CD4-positive, alpha-beta memory T cell (primary cell): ENCODE measurements at regions of chr11 and their contacts with region 1.

Region 1: DNA sequence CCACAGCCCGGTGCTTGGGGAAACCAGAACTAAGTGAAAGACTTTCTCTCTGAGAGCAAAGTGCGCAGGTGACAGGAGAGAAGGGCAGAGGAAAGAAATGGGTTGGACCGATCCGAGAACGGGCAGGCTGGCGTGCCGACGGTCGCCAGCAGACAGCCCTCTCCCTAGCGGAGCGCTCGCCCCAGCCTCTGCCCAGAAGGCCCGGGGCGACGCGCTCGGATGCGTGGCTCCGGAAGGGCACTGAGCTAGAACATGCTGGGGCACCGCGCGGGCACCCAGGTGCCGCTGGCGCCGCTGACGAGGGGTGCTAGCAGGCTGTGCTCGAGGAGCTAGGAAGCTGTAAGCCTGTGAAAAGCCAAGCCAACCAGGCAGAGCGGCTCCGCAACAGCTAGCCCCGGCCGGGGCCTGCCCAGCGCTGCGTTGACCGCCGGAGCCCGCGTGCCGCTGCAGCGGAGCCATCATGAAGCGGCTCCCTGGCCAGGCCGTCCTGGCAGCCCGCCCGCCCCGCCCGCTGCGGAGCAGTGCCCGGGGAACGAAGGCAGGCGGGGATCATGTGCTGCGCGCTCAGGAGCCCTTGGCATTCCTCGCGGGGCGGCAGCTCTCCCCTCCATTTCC is 22.1 kb upstream of the RRAS2 start:
- DNase-seq: peak; percentile 34 to 44 (median 41)
- H3K4me3 ChIP-seq: peak overlapping the region; percentile 36 to 37
- H3K4me3 Mint-ChIP-seq: peak overlapping the region; percentile 72 to 87 (median 80)
- H3K27ac ChIP-seq: no peak overlapping the region
- H3K27ac Mint-ChIP-seq: no peak overlapping the region
- H3K4me1 ChIP-seq: no peaks in the 10 kb centered on the region
- H3K4me1 Mint-ChIP-seq: peaks cover 0 to 5% (median 2%) of the 10 kb centered on the region in 4 donors
- H3K27me3 ChIP-seq: no peaks in the 10 kb centered on the region
- H3K27me3 Mint-ChIP-seq: peaks cover 10% of the 10 kb centered on the region in 2 donors

Region 2: DNA sequence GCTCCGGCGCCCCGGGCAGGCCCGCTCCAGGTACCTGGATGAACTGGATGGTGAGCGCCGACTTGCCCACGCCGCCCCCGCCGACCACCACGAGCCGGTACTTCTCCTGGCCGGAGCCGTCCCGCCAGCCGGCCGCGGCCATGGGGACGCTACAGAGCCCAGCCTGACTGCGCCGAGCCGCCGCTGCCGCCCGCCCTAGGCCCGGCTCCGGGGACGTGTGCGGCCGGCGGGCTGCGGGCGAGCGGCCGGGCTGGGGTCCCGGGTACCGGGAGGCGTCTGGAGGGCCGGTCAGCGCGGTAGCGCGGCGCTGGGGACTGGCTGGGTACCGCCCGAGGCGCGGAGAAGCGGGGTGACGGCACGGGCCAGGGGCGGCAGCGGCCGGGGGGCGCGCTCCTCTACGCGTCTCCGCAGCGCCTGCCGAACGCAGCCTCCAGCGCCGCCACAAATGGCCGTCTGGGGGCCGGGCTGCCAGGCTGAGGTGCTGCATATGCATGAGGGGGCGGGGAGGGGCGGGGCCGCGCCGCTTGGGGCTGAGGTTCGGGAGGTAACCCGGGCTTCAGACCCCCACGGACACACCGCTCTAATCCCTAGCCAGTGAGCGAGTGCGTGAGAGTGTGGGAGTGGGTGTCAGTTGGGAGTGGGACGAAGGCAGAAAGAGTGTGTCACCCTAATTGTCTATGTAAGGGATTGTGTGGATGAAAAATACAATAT is 22.2 kb before region 1 on chr11 and contains the start of gene RRAS2:
- CTCF ChIA-PET with region 1: no interaction called
- POLR2A ChIA-PET with region 1: interaction called, 3 read pairs
- intact Hi-C with region 1: loop called (anchors 2 kb)
- DNase-seq: peak; percentile 70 to 79 (median 78)
- H3K4me3 ChIP-seq: peak within 1 kb of the TSS; percentile 52 to 66
- H3K4me3 Mint-ChIP-seq: peak within 1 kb of the TSS; percentile 91 to 99 (median 97)
- H3K27ac ChIP-seq: peak within 1 kb of the TSS; percentile 44
- H3K27ac Mint-ChIP-seq: peak within 1 kb of the TSS; percentile 79 to 98 (median 91)
- H3K4me1 ChIP-seq: peaks cover 16% of the 10 kb centered on the region
- H3K4me1 Mint-ChIP-seq: peaks cover 24 to 37% (median 30%) of the 10 kb centered on the region in 4 donors
- H3K27me3 ChIP-seq: no peaks in the 10 kb centered on the region
- H3K27me3 Mint-ChIP-seq: no peaks in the 10 kb centered on the region
- total RNA-seq, gene RRAS2: 11.4 to 11.8 TPM